ENCODE measurements at regions of chr4 and their contacts with region 1.

Region 1: GRCh38 chr4:18366892-18367291 is 345.3 kb upstream of the LCORL start:
- DNase-seq: no peak
- ATAC-seq: peak in 2 of 4 donors; percentile 42 to 47
- H3K4me3 ChIP-seq: no peak overlapping the region
- H3K27ac ChIP-seq: no peak overlapping the region
- H3K4me1 ChIP-seq: no peaks in the 10 kb centered on the region
- H3K27me3 ChIP-seq: no peaks in the 10 kb centered on the region
- CTCF ChIP-seq: peak; percentile 17 to 53 (median 36)
- POLR2A ChIP-seq: no peak

Region 2: DNA sequence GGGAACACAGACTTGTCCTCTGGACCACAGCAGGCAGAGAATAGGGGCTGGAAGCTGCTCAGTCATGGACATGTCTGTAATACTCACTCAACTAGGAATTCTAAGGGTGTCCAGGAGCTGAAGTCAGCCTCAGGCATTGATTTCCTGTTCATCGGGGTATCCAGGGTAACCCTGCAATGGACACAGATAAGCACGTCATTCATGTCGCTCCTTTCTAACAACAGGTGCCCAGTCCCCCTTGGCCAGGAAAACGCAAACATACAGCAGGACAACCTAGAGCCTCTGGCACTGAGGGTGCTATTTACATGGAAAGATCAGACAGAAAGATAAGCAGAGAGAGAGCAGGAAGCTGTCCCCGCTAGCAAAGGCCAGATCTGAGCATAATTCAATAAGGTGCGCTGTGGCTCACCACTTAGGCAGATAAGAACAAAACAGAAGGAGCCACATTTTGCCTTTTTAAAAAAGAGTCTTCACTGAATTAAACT is 876.3 kb before region 1 on chr4:
- intact Hi-C with region 1: no loop called
- DNase-seq: no peak
- ATAC-seq: no peak
- H3K4me3 ChIP-seq: no peak overlapping the region
- H3K27ac ChIP-seq: no peak overlapping the region
- H3K4me1 ChIP-seq: peaks cover 0 to 28% (median 2%) of the 10 kb centered on the region in 12 donors
- H3K27me3 ChIP-seq: no peaks in the 10 kb centered on the region
- CTCF ChIP-seq: no peak
- POLR2A ChIP-seq: no peak

Region 3: DNA sequence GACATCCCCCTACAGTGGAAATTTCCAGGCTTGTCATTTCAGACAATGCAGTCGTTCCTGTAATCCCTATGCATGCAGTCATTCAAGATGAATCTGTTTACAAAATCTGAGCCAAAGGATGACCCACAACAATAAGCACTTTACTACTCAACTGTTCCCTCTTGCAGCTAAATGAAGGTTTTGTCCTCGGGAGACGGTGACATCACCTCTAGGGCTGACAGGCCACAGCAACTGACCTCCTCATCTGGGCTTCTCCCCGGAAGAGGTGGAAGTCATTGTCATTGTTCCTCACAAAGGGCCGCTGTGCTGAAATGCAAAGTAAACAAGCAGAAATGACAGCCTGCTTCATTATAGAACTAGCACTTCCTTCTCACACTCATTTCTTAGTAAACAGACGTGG is 822.7 kb before region 1 on chr4:
- intact Hi-C with region 1: loop called in 2 of 10 experiments (anchors 5 to 10 kb)
- DNase-seq: no peak
- ATAC-seq: no peak
- H3K4me3 ChIP-seq: no peak overlapping the region
- H3K27ac ChIP-seq: no peak overlapping the region
- H3K4me1 ChIP-seq: peaks cover 0 to 7% (median 0%) of the 10 kb centered on the region in 12 donors
- H3K27me3 ChIP-seq: no peaks in the 10 kb centered on the region
- CTCF ChIP-seq: no peak
- POLR2A ChIP-seq: no peak

Region 4: DNA sequence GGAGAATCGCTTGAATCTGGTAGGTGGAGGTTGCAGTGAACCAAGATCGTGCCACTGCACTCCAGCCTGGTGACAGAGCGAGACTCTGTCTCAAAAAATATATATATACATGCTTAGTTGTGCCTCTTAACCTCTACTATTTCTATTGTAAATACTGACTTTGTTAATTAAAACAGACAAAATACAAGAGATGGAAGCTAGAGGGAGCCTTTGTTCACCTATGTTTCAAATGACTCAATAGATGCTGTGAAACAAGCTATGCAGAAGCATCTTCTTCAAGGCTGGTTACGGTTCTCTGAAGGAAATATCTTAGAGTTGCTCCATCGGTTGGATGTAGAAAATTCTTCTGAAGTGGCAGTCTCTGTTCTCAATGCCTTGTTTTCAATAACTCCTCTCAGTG is 549.9 kb before region 1 on chr4:
- intact Hi-C with region 1: loop called in 9 of 10 experiments (anchors 2 to 10 kb)
- DNase-seq: no peak
- ATAC-seq: peak in 2 of 4 donors; percentile 36 to 49
- H3K4me3 ChIP-seq: no peak overlapping the region
- H3K27ac ChIP-seq: no peak overlapping the region
- H3K4me1 ChIP-seq: peaks cover 0 to 16% (median 0%) of the 10 kb centered on the region in 12 donors
- H3K27me3 ChIP-seq: no peaks in the 10 kb centered on the region
- CTCF ChIP-seq: peak; percentile 36 to 69 (median 56)
- POLR2A ChIP-seq: no peak

Region 5: DNA sequence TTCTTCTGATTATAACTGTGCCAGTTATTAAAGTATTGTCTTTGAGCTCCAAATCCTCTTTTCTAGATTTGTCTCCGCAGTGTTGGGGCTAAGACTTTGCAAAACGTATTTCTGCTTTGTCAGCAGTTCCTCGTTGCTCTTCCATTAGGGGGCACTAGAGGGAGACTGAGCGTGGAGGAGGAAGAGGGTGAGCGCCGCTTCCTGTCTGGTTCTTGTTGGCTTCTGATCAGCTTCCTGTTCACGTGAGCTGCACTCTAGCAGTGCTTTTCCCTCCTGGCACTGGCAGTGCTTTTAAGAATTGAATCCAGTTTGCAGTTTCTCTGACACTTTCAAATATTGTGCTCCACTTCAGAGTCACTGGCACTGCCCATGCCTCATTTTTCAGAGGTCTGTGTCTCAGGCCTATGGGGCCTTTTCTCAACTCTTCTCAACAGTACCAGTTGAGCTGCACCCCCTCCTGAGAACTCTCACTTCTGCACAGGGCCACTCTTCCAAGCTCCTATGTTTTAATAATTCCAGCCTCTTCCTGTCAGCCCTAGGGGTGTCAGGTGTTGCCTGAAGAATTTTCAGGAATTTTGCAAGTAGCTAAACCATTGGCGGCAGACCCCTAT is 291.0 kb before region 1 on chr4:
- intact Hi-C with region 1: loop called in 1 of 10 experiments (anchors 5 kb)
- DNase-seq: peak in 4 of 5 donors; percentile 33 to 57 (median 40)
- ATAC-seq: peak in 2 of 4 donors; percentile 52 to 78
- H3K4me3 ChIP-seq: no peak overlapping the region
- H3K27ac ChIP-seq: peak overlapping the region in 3 of 12 donors; percentile 2 to 41 (median 21)
- H3K4me1 ChIP-seq: peaks cover 0 to 13% (median 3%) of the 10 kb centered on the region in 12 donors
- H3K27me3 ChIP-seq: peaks cover 0 to 4% (median 0%) of the 10 kb centered on the region in 9 donors
- CTCF ChIP-seq: peak; percentile 29 to 60 (median 50)
- POLR2A ChIP-seq: no peak

Region 6: GRCh38 chr4:18593445-18594002 is 226.6 kb after region 1 on chr4:
- intact Hi-C with region 1: loop called in 1 of 10 experiments (anchors 10 kb)
- DNase-seq: peak in 2 of 5 donors; percentile 32 to 40
- ATAC-seq: peak in 3 of 4 donors; percentile 50 to 73 (median 61)
- H3K4me3 ChIP-seq: no peak overlapping the region
- H3K27ac ChIP-seq: no peak overlapping the region
- H3K4me1 ChIP-seq: peaks cover 0 to 8% (median 0%) of the 10 kb centered on the region in 12 donors
- H3K27me3 ChIP-seq: peaks cover 0 to 4% (median 0%) of the 10 kb centered on the region in 9 donors
- CTCF ChIP-seq: peak; percentile 66 to 88 (median 82)
- POLR2A ChIP-seq: no peak